H1 (cell line): ENCODE measurements at regions of chr7 and their contacts with region 1.

Region 1: GRCh38 chr7:135274495-135275268 is 41.0 kb downstream of the STRA8 start:
- DNase-seq: peak; percentile 71 to 98
- H3K4me3 ChIP-seq: no peak overlapping the region
- H3K27ac ChIP-seq: no peak overlapping the region
- H3K4me1 ChIP-seq: no peaks in the 10 kb centered on the region; a peak in 1 of 7 replicates
- H3K27me3 ChIP-seq: no peaks in the 10 kb centered on the region
- CTCF ChIP-seq: peak; percentile 56 to 91 (median 74)
- EP300 ChIP-seq: no peak
- POLR2A ChIP-seq: no peak
- RAD21 ChIP-seq: peak; percentile 87 to 92

Region 2: DNA sequence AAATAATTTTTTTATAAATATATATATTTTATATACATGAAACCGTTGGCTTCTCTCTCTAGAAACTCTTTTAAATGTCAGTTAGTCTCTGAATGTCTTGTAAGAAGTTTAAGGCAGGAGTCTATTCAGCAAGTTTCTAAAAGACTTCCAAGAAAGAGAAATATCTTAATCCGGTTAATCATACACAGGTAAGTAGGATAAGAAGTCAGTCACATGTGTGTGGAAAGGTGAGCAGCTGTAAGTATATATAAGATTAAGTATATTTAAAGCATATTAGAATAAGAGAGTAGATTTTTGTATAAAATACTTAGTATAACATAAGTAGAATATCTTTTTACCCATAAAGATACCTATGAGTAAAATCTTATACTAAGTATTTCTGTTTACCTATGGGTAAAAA is 239.4 kb before region 1 on chr7:
- CTCF ChIA-PET with region 1: no interaction called
- POLR2A ChIA-PET with region 1: no interaction called
- DNase-seq: no peak
- H3K4me3 ChIP-seq: no peak overlapping the region
- H3K27ac ChIP-seq: no peak overlapping the region
- H3K4me1 ChIP-seq: no peaks in the 10 kb centered on the region
- H3K27me3 ChIP-seq: no peaks in the 10 kb centered on the region
- CTCF ChIP-seq: no peak
- EP300 ChIP-seq: no peak
- POLR2A ChIP-seq: no peak
- RAD21 ChIP-seq: no peak

Region 3: GRCh38 chr7:135177021-135177696 is 97.5 kb before region 1 on chr7:
- CTCF ChIA-PET with region 1: no interaction called
- POLR2A ChIA-PET with region 1: no interaction called
- DNase-seq: peak in 1 of 2 experiments; percentile 39
- H3K4me3 ChIP-seq: no peak overlapping the region
- H3K27ac ChIP-seq: no peak overlapping the region
- H3K4me1 ChIP-seq: peaks cover 0 to 3% (median 2%) of the 10 kb centered on the region in 4 experiments; a peak in 3 of 7 replicates
- H3K27me3 ChIP-seq: no peaks in the 10 kb centered on the region
- CTCF ChIP-seq: no peak
- EP300 ChIP-seq: no peak
- POLR2A ChIP-seq: no peak
- RAD21 ChIP-seq: no peak

Region 4: GRCh38 chr7:135253898-135254771 is 20.5 kb before region 1 on chr7:
- CTCF ChIA-PET with region 1: interaction called, 53 read pairs
- POLR2A ChIA-PET with region 1: no interaction called
- DNase-seq: no peak
- H3K4me3 ChIP-seq: no peak overlapping the region
- H3K27ac ChIP-seq: no peak overlapping the region
- H3K4me1 ChIP-seq: no peaks in the 10 kb centered on the region
- H3K27me3 ChIP-seq: no peaks in the 10 kb centered on the region; a peak in 2 of 7 replicates
- CTCF ChIP-seq: no peak
- EP300 ChIP-seq: no peak
- POLR2A ChIP-seq: no peak
- RAD21 ChIP-seq: no peak

Region 5: DNA sequence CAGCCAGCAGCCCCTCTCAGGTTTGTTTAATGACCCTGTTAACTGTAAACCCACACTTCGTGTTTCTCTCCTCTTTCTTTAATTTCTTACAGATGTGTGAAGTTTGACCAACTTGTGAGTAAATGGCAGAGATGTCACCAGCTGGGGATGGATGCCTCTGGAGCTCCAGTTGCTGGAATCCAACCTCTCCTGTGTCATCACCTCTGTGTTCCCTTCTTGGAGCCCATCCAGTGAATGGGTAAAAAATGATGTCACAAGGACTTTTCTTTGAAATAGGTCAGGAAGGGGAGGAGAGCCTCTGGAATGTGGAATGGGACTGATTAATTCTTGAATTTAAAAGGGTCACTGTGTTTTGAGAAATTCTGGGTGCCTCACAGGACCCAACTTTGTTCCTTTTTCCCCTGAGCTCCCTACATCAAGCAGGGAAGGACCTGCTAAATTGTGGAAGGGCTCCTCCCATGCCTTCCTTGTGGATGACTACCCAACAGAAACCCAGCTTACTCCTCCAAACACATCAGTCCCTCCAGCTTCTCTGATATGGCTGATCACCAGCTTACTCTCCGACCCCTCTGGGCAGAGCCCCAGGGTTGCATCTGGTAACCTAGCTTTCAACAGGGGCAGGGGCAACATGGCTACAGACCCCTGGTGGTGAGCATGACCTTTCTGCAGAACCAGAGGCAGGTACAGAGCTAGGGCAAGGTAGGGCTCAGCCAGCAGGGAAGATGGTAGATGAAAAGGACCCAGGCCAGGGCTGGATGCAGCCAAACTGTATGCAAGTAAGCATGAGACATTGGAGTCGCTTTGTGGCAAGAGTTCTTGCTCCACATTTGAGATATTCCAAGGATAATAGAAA is 26.5 kb after region 1 on chr7:
- CTCF ChIA-PET with region 1: interaction called, 13 read pairs
- POLR2A ChIA-PET with region 1: no interaction called
- DNase-seq: no peak
- H3K4me3 ChIP-seq: no peak overlapping the region
- H3K27ac ChIP-seq: no peak overlapping the region
- H3K4me1 ChIP-seq: peaks cover 0 to 6% (median 1%) of the 10 kb centered on the region in 4 experiments; a peak in 1 of 7 replicates
- H3K27me3 ChIP-seq: no peaks in the 10 kb centered on the region
- CTCF ChIP-seq: no peak
- EP300 ChIP-seq: no peak
- POLR2A ChIP-seq: no peak
- RAD21 ChIP-seq: no peak

Region 6: DNA sequence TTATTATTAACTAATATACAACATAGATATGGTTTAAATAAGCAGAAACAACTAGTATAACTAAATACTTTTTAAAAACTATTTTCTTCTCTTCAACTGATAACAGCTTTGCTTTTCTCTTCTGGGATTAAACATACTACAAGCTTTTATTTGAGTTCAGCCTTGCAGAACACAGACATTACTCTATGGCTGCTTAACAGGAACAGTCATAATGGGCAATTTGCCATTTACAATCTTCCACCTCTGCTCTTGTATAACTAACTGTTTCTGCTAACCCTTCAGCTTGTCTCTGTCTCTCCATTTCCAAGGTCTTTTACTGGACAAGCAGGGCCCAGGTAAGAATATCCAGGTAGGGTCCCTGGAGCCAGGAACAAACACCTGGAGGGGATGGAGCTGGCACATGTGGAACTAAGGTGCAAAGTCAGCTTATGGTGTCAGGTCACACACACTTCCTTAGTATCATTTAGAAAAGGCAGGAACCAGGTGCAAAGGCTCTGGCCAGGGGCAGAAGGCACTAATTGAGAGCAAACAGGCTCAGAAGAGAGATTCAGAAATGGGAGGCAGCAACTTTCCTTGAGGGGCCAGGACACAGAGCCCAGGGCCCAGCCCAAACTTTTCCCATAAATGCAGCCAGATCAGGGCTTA is 52.1 kb after region 1 on chr7:
- CTCF ChIA-PET with region 1: interaction called, 49 read pairs
- POLR2A ChIA-PET with region 1: no interaction called
- DNase-seq: no peak
- H3K4me3 ChIP-seq: no peak overlapping the region
- H3K27ac ChIP-seq: no peak overlapping the region
- H3K4me1 ChIP-seq: no peaks in the 10 kb centered on the region
- H3K27me3 ChIP-seq: no peaks in the 10 kb centered on the region
- CTCF ChIP-seq: no peak
- EP300 ChIP-seq: no peak
- POLR2A ChIP-seq: no peak
- RAD21 ChIP-seq: no peak

Region 7: GRCh38 chr7:135342887-135343286 is 68.2 kb after region 1 on chr7:
- CTCF ChIA-PET with region 1: interaction called, 171 read pairs
- POLR2A ChIA-PET with region 1: no interaction called
- DNase-seq: no peak
- H3K4me3 ChIP-seq: no peak overlapping the region
- H3K27ac ChIP-seq: no peak overlapping the region
- H3K4me1 ChIP-seq: no peaks in the 10 kb centered on the region; a peak in 1 of 7 replicates
- H3K27me3 ChIP-seq: no peaks in the 10 kb centered on the region
- CTCF ChIP-seq: no peak
- EP300 ChIP-seq: no peak
- POLR2A ChIP-seq: no peak
- RAD21 ChIP-seq: no peak

Region 8: GRCh38 chr7:135355377-135356042 is 80.8 kb after region 1 on chr7:
- CTCF ChIA-PET with region 1: interaction called, 61 read pairs
- POLR2A ChIA-PET with region 1: no interaction called
- DNase-seq: no peak
- H3K4me3 ChIP-seq: no peak overlapping the region
- H3K27ac ChIP-seq: no peak overlapping the region
- H3K4me1 ChIP-seq: no peaks in the 10 kb centered on the region
- H3K27me3 ChIP-seq: no peaks in the 10 kb centered on the region
- CTCF ChIP-seq: no peak
- EP300 ChIP-seq: no peak
- POLR2A ChIP-seq: no peak
- RAD21 ChIP-seq: no peak

Region 9: GRCh38 chr7:135385209-135385608 is 110.5 kb after region 1 on chr7:
- CTCF ChIA-PET with region 1: interaction called, 15 read pairs
- POLR2A ChIA-PET with region 1: no interaction called
- DNase-seq: no peak
- H3K4me3 ChIP-seq: no peak overlapping the region
- H3K27ac ChIP-seq: no peak overlapping the region
- H3K4me1 ChIP-seq: peaks cover 2 to 7% (median 5%) of the 10 kb centered on the region in 4 experiments; a peak in 6 of 7 replicates
- H3K27me3 ChIP-seq: no peaks in the 10 kb centered on the region
- CTCF ChIP-seq: no peak
- EP300 ChIP-seq: no peak
- POLR2A ChIP-seq: no peak
- RAD21 ChIP-seq: no peak